AG04449 (cell line): ENCODE measurements at regions of chr16 and their contacts with region 1.

Region 1: DNA sequence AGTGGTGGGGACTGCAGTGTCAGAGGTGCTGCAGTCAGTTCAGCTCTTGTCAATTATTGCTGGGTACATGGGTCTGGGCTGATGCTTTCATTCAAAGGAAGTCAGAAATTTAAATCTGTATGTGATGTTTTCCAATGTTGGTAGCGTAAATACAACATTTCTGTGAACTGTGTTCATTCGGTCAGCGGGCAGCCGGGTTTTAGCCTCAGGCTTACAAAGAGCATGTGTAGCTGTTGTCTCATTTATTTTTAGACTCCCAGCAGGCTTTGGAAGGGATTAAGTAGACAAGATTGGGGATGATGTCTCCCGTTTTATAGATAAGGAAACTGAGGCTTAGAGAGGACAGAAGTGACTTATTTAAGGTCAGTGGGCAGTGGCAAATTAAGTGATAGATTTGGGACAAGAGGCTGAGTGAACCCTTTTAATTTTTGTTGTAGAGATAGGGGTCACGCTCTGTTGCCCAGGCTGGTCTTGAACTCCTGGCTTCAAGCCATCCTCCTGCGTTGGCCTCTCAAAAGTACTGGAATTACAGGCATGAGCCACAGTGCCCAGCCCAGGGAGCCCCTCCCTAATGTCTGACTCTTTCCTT is 8.1 kb downstream of the AQP8 start:
- DNase-seq: no peak
- H3K4me3 ChIP-seq: no peak overlapping the region
- CTCF ChIP-seq: no peak

Region 2: DNA sequence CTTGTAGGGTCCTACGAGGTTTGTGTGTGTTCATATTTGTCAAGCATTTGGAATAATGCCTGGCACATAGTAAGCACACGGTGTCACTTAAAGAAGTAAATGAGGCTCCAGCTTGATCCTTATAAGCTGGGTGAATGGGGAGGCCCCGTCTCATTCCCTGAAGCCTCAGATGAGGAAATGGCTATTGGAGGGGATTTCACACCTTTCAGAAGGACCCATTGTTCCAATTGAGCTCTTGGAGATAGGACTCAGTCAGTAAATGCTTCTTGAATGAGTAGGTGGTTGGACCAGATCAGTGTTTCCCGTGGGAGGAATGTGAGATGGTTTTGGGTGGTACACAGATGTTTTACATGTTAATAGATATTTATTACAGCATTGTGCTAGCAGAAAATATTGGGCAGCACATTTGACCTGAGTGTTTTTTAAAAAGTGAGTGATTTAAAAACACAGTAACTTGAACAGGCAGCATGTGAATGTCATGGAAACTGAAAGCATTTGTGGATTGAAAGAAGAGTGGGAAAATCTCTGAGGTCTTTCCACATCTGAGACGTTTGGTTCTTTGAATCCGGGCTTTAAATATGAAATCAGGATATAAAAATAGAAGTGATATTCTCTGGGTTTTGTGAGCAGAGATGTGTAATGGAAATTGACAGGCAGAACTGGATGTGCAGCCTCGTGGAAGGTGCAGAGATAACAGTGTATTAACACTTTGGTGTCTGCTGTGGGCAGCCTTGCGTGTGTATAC is 173.2 kb before region 1 on chr16:
- CTCF ChIA-PET with region 1: interaction called, 37 read pairs
- POLR2A ChIA-PET with region 1: interaction called, 3 read pairs
- DNase-seq: no peak
- H3K4me3 ChIP-seq: no peak overlapping the region
- CTCF ChIP-seq: no peak

Region 3: DNA sequence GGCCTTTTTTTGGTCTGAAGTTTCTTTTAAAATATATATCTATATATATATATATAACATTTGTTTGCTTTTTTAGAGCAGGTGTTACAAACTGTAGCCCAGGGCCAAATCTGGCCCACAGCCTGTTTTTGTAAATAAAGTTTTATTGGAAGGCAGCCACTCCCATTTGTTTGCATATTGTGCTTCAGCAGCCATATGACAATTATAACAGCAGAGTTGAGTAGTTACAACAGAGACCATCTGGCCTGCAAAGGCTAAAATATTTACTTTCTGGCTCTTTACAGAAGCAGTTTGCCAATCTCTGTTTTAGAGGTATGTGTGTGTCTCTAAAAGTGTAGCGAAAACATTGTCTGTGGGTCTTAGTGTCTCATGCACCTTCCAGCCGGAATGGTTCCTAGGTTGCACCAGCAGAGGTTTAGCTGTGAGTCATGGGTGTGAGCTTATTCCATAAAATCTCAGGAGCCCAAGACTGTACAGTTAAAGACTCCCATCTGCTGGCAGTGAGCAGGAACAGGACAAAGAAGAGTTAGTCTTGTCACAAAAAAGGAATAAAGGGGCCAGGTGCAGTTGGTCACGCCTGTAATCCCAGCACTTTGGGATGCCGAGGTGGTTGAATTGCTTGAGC is 89.5 kb before region 1 on chr16:
- CTCF ChIA-PET with region 1: interaction called, 77 read pairs
- POLR2A ChIA-PET with region 1: no interaction called
- DNase-seq: peak; percentile 24
- H3K4me3 ChIP-seq: no peak overlapping the region
- CTCF ChIP-seq: peak; percentile 41

Region 4: GRCh38 chr16:25187506-25187825 is 37.4 kb before region 1 on chr16:
- CTCF ChIA-PET with region 1: interaction called, 11 read pairs
- POLR2A ChIA-PET with region 1: no interaction called
- DNase-seq: no peak
- H3K4me3 ChIP-seq: no peak overlapping the region
- CTCF ChIP-seq: no peak

Region 5: DNA sequence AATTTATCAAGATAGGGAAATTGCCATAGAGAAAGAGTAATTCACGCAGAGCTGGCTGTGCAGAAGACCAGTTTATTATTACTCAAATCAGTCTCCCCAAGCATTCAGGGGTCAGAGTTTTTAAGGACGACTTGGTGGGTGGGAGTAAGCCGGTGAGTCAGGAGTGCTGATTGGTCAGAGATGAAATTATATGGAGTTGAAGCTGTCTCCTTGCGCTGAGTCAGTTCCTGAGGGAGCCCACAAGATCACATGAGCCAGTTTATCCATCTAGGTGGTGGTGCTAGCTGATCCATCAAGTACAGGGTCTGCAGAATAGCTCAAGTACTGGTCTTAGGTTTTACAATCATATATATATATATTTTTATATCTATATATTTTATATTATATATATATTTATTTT is 14.1 kb before region 1 on chr16:
- CTCF ChIA-PET with region 1: interaction called, 77 read pairs
- POLR2A ChIA-PET with region 1: no interaction called
- DNase-seq: no peak
- H3K4me3 ChIP-seq: no peak overlapping the region
- CTCF ChIP-seq: no peak